Motor neuron (in vitro differentiated cells): ENCODE measurements at regions of chr7 and their contacts with region 1.

Region 1: DNA sequence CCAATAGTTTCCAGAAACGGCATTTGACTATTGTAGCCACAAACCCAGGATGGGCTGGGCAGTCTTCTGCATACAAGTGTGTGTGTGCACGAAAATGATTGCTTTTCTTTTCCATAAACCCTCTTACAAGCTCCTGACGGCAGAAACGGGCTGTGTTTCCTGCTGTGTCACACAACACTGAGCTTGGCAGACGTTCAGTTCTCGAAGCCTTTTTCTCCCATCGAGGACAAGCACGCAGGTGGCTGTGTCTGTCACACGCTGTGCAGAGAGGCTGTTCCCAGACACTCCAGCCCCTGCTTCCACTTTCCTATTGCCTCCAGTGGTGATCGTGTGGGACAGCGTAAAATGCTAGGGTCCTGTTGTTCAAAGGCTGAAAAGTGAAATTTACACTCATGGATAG is 32.1 kb downstream of the RBAK start:
- ATAC-seq: peak in 1 of 8 experiments; percentile 76
- H3K4me3 ChIP-seq: no peak overlapping the region
- H3K27ac ChIP-seq: no peak overlapping the region
- H3K4me1 ChIP-seq: no peaks in the 10 kb centered on the region

Region 2: GRCh38 chr7:4775250-4775847 is 302.4 kb before region 1 on chr7 and contains the start of gene AP5Z1:
- in situ Hi-C with region 1: loop called in 1 of 9 experiments (anchors 25 kb)
- ATAC-seq: peak; percentile 83 to 96 (median 94)
- H3K4me3 ChIP-seq: peak within 1 kb of the TSS; percentile 71 to 98 (median 87)
- H3K27ac ChIP-seq: peak within 1 kb of the TSS; percentile 84 to 91
- H3K4me1 ChIP-seq: peaks cover 13 to 14% of the 10 kb centered on the region in 2 donors
- total RNA-seq, gene AP5Z1: 9.1 to 34.0 (median 18.3) TPM

Region 3: GRCh38 chr7:4809091-4809591 is 268.6 kb before region 1 on chr7:
- in situ Hi-C with region 1: loop called in 1 of 9 experiments (anchors 25 kb)
- ATAC-seq: no peak
- H3K4me3 ChIP-seq: no peak overlapping the region
- H3K27ac ChIP-seq: no peak overlapping the region
- H3K4me1 ChIP-seq: peaks cover 0 to 3% of the 10 kb centered on the region in 2 donors

Region 4: DNA sequence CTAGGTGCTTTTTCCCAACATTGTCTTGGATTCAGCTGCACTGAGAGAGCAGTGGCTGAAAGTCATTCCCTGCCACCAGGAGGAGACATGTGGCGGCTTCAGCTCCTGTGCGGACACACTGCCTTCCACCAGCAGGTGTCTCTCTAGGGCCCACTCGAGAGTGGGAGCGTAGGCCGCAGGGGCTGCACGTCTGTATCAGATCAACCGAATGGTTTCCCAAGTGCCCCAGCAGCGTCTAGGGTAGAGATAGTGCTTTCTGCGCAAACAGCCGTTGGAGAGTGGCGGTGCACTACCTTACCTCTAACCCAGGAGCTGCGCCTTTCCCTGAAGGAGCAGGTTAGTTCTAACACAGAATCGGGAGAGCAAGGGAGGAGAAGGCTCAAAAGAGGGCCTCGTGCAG is 247.6 kb before region 1 on chr7:
- in situ Hi-C with region 1: loop called in 1 of 9 experiments (anchors 25 kb)
- ATAC-seq: peak in 7 of 8 experiments; percentile 49 to 99 (median 90)
- H3K4me3 ChIP-seq: no peak overlapping the region
- H3K27ac ChIP-seq: no peak overlapping the region
- H3K4me1 ChIP-seq: no peaks in the 10 kb centered on the region

Region 5: GRCh38 chr7:5237286-5237685 is 159.5 kb after region 1 on chr7:
- in situ Hi-C with region 1: no loop called
- ATAC-seq: peak in 2 of 8 experiments; percentile 20 to 32
- H3K4me3 ChIP-seq: no peak overlapping the region
- H3K27ac ChIP-seq: no peak overlapping the region
- H3K4me1 ChIP-seq: peaks cover 17 to 34% of the 10 kb centered on the region in 2 donors

Region 6: GRCh38 chr7:5309146-5309545 is 231.4 kb after region 1 on chr7:
- in situ Hi-C with region 1: no loop called
- ATAC-seq: no peak
- H3K4me3 ChIP-seq: no peak overlapping the region
- H3K27ac ChIP-seq: no peak overlapping the region
- H3K4me1 ChIP-seq: no peaks in the 10 kb centered on the region